Prostate gland (tissue), 2 donors: ENCODE measurements at regions of chr11 and their contacts with region 1.

Region 1: DNA sequence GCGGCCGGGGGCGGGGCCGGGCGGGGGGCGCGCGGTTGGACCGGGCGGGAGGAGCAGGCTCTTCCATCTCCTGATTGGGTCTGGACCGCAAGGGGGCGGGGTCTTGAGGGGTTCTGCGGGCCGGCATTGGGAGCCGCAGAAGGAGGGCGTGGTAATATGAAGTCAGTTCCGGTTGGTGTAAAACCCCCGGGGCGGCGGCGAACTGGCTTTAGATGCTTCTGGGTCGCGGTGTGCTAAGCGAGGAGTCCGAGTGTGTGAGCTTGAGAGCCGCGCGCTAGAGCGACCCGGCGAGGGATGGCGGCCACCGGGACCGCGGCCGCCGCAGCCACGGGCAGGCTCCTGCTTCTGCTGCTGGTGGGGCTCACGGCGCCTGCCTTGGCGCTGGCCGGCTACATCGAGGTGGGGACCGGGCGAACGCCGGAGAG is at the start of gene APLP2:
- DNase-seq: peak; percentile 99
- H3K4me3 ChIP-seq: peak within 1 kb of the TSS; percentile 82 to 97
- H3K27ac ChIP-seq: peak within 1 kb of the TSS; percentile 90 to 96
- H3K4me1 ChIP-seq: no peaks in the 10 kb centered on the region
- H3K27me3 ChIP-seq: no peaks in the 10 kb centered on the region
- CTCF ChIP-seq: no peak
- POLR2A ChIP-seq: peak; percentile 94
- total RNA-seq, gene APLP2: 222 to 434 TPM

Region 2: DNA sequence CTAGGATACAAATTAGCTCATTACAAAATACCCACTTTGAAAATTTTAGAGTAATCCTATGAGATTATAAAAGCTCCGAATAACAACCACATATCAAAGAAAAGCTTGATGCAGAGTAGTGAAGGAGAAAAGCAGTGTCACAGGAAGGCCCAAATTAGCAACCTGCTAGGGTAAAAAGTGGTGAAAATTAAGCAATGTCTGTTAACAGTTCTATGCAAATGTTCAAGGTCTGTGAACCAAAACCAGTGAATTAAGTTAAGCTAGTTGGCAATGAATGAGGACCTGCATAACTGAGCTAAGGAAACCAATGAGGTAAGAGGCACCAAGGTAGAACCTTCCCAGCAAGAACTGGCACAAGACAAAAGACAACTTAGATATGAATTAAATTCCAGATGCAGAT is 96.6 kb before region 1 on chr11:
- intact Hi-C with region 1: no loop called
- DNase-seq: no peak
- H3K4me3 ChIP-seq: no peak overlapping the region
- H3K27ac ChIP-seq: no peak overlapping the region
- H3K4me1 ChIP-seq: no peaks in the 10 kb centered on the region
- H3K27me3 ChIP-seq: no peaks in the 10 kb centered on the region
- CTCF ChIP-seq: no peak
- POLR2A ChIP-seq: no peak

Region 3: GRCh38 chr11:130029137-130029536 is 40.6 kb before region 1 on chr11:
- intact Hi-C with region 1: no loop called
- DNase-seq: no peak
- H3K4me3 ChIP-seq: no peak overlapping the region
- H3K27ac ChIP-seq: no peak overlapping the region
- H3K4me1 ChIP-seq: no peaks in the 10 kb centered on the region
- H3K27me3 ChIP-seq: no peaks in the 10 kb centered on the region
- CTCF ChIP-seq: no peak
- POLR2A ChIP-seq: no peak

Region 4: DNA sequence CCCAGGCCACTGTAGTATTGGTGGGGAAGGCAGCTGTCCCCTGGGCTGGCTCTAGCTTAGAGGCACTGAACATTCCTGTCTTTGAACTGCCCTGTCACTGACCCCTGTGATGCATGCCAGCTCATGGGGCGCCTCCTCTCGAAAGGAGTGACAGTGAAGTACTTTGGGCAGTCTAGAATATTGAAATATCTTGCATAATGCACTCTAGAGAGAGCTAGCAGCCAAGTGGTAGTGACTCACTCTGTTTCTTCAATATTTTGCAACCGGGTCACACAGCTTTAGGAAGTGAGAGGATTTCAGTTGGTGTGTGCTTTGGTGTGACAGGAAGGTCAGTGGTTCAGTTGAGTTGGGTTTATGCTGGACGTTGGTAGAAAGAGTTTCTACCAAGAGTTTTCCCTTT is 54.4 kb after region 1 on chr11:
- intact Hi-C with region 1: loop called (anchors 10 kb)
- DNase-seq: no peak
- H3K4me3 ChIP-seq: no peak overlapping the region
- H3K27ac ChIP-seq: no peak overlapping the region
- H3K4me1 ChIP-seq: no peaks in the 10 kb centered on the region
- H3K27me3 ChIP-seq: no peaks in the 10 kb centered on the region
- CTCF ChIP-seq: no peak
- POLR2A ChIP-seq: no peak

Region 5: GRCh38 chr11:130314750-130315285 is 245.1 kb after region 1 on chr11 and contains the start of gene ZBTB44:
- intact Hi-C with region 1: loop called (anchors 2 kb)
- DNase-seq: peak; percentile 92
- H3K4me3 ChIP-seq: peak within 1 kb of the TSS; percentile 80 to 87
- H3K27ac ChIP-seq: peak within 1 kb of the TSS; percentile 93 to 97
- H3K4me1 ChIP-seq: no peaks in the 10 kb centered on the region
- H3K27me3 ChIP-seq: no peaks in the 10 kb centered on the region
- CTCF ChIP-seq: no peak
- POLR2A ChIP-seq: peak; percentile 66
- total RNA-seq, gene ZBTB44: 35.9 to 80.3 TPM